T-cell (primary cell): ENCODE measurements at regions of chr20 and their contacts with region 1.

Region 1: GRCh38 chr20:39075731-39076130 is 113.6 kb downstream of the DHX35 start:
- DNase-seq: no peak
- ATAC-seq: no peak
- H3K4me3 ChIP-seq: no peak overlapping the region
- H3K4me3 Mint-ChIP-seq: no peak overlapping the region
- H3K27ac ChIP-seq: no peak overlapping the region
- H3K27ac Mint-ChIP-seq: no peak overlapping the region
- H3K4me1 ChIP-seq: peaks cover 0 to 2% of the 10 kb centered on the region in 2 experiments
- H3K4me1 Mint-ChIP-seq: peaks cover 0 to 2% (median 2%) of the 10 kb centered on the region in 3 donors
- H3K27me3 ChIP-seq: peaks cover 0 to 23% of the 10 kb centered on the region in 2 experiments
- H3K27me3 Mint-ChIP-seq: peaks cover 44 to 47% of the 10 kb centered on the region in 2 donors

Region 2: GRCh38 chr20:39181490-39181889 is 105.8 kb after region 1 on chr20:
- CTCF ChIA-PET with region 1: no interaction called
- POLR2A ChIA-PET with region 1: no interaction called
- DNase-seq: no peak
- ATAC-seq: no peak
- H3K4me3 ChIP-seq: no peak overlapping the region
- H3K4me3 Mint-ChIP-seq: no peak overlapping the region
- H3K27ac ChIP-seq: no peak overlapping the region
- H3K27ac Mint-ChIP-seq: no peak overlapping the region
- H3K4me1 ChIP-seq: no peaks in the 10 kb centered on the region
- H3K4me1 Mint-ChIP-seq: no peaks in the 10 kb centered on the region
- H3K27me3 ChIP-seq: peaks cover 0 to 3% of the 10 kb centered on the region in 2 experiments
- H3K27me3 Mint-ChIP-seq: peaks cover 5 to 9% of the 10 kb centered on the region in 2 donors

Region 3: DNA sequence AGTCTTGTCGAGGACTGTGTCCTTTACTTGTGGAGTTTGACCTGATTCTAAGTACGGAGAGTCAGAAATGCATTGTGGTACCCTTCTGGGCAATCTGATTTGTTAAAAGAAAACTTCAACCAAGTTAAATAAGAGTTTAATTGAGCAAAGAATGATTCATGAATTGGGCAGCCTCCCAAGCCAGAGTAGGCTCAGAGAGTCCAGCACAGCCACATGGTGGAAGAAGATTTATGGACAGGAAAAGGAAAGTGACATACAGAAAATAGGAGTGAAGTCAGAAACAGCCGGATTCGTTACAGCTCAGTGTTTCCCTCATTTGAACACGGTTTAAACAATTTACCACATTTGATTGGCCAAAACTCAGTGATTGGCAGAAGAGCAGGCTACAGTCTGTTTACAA is 215.6 kb after region 1 on chr20:
- CTCF ChIA-PET with region 1: no interaction called
- POLR2A ChIA-PET with region 1: no interaction called
- DNase-seq: no peak
- ATAC-seq: no peak
- H3K4me3 ChIP-seq: no peak overlapping the region
- H3K4me3 Mint-ChIP-seq: no peak overlapping the region
- H3K27ac ChIP-seq: no peak overlapping the region
- H3K27ac Mint-ChIP-seq: no peak overlapping the region
- H3K4me1 ChIP-seq: no peaks in the 10 kb centered on the region
- H3K4me1 Mint-ChIP-seq: no peaks in the 10 kb centered on the region
- H3K27me3 ChIP-seq: peaks cover 2% of the 10 kb centered on the region in 2 experiments
- H3K27me3 Mint-ChIP-seq: peaks cover 10 to 11% of the 10 kb centered on the region in 2 donors

Region 4: DNA sequence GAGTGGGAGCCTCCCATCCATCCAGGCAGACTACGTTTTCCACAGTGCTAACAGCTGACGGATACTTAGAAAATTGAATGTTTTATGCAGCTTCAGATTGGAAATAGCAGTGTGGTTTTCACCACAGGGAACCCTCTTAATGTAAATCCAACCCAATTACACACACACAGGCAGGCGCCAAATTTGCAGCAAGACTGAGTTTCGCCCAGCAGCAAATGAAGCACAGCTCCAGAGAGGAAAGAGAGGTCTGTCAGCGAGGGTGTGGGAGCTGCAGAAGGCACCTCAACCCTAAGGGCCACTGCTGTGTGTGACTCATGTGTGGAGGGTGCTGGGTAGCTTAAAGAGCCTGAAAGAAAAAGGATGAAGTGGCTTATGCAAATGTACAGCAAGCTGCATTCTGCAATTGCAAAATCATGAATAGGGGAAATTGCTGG is 1247.6 kb after region 1 on chr20:
- CTCF ChIA-PET with region 1: interaction called in 1 of 2 experiments, 11 read pairs
- POLR2A ChIA-PET with region 1: no interaction called
- DNase-seq: peak in 1 of 35 experiments; percentile 12
- ATAC-seq: no peak
- H3K4me3 ChIP-seq: no peak overlapping the region
- H3K4me3 Mint-ChIP-seq: no peak overlapping the region
- H3K27ac ChIP-seq: no peak overlapping the region
- H3K27ac Mint-ChIP-seq: no peak overlapping the region
- H3K4me1 ChIP-seq: no peaks in the 10 kb centered on the region
- H3K4me1 Mint-ChIP-seq: no peaks in the 10 kb centered on the region
- H3K27me3 ChIP-seq: peaks cover 0 to 2% of the 10 kb centered on the region in 2 experiments
- H3K27me3 Mint-ChIP-seq: peaks cover 3 to 13% of the 10 kb centered on the region in 2 donors